Activated CD8-positive, alpha-beta memory T cell treated with anti-CD3 and anti-CD28 coated beads, Interleukin-2, amount 10 ng/mL, durations not matched to agents 7 days and 5 days (primary cell): ENCODE measurements at regions of chr13 and their contacts with region 1.

Region 1: GRCh38 chr13:24220086-24220703 is 59.7 kb downstream of the SPATA13 start:
- DNase-seq: peak; percentile 75
- ATAC-seq: peak; percentile 77
- H3K4me3 Mint-ChIP-seq: no peak overlapping the region
- H3K27ac Mint-ChIP-seq: no peak overlapping the region
- H3K4me1 Mint-ChIP-seq: peaks cover 54% of the 10 kb centered on the region
- H3K27me3 Mint-ChIP-seq: no peaks in the 10 kb centered on the region

Region 2: DNA sequence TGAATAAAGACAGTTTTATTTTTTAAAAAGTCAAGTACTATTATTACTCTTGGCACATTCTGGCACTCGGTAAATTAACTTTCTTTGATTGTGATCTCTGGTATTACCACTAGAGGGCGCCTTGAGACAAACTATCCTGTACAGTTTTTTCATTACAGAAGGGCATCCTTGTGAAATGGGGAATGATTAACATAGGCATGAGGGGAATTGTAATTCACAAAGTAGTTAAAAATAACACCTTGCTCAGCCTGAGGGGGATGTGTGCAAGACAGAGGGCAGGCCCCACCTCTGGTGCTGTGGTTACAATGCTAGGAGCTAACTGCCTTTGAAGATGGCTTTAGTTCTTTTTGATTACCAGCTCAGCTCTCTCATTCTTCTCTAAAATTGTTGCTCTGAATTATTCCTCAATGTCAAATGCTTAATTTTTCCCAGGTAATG is 298.7 kb before region 1 on chr13:
- CTCF ChIA-PET with region 1: interaction called, 15 read pairs
- DNase-seq: no peak
- ATAC-seq: no peak
- H3K4me3 Mint-ChIP-seq: no peak overlapping the region
- H3K27ac Mint-ChIP-seq: no peak overlapping the region
- H3K4me1 Mint-ChIP-seq: no peaks in the 10 kb centered on the region
- H3K27me3 Mint-ChIP-seq: peaks cover 59% of the 10 kb centered on the region

Region 3: DNA sequence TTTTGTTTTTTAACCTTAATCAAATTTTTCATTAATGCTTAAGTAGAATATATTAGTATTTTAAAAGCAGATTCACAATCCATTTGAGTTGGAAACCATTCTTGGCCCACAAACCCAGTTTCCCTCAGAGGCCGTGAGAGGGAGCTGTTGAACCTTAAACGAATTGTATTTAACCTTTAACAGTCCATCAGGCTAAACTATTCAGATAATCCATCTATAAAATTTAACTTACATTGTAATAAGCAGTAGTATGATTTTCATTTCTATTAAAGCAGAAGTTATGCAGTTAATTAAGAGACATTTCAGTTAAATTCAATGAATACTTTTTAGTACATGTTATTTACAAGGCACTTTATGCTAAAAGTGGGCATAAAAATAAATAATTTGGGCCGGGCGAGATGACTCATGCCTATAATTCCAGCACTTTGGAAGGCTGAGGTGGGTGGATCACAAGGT is 199.8 kb before region 1 on chr13:
- CTCF ChIA-PET with region 1: interaction called, 37 read pairs
- DNase-seq: peak; percentile 65
- ATAC-seq: peak; percentile 45
- H3K4me3 Mint-ChIP-seq: no peak overlapping the region
- H3K27ac Mint-ChIP-seq: no peak overlapping the region
- H3K4me1 Mint-ChIP-seq: peaks cover 10% of the 10 kb centered on the region
- H3K27me3 Mint-ChIP-seq: no peaks in the 10 kb centered on the region

Region 4: DNA sequence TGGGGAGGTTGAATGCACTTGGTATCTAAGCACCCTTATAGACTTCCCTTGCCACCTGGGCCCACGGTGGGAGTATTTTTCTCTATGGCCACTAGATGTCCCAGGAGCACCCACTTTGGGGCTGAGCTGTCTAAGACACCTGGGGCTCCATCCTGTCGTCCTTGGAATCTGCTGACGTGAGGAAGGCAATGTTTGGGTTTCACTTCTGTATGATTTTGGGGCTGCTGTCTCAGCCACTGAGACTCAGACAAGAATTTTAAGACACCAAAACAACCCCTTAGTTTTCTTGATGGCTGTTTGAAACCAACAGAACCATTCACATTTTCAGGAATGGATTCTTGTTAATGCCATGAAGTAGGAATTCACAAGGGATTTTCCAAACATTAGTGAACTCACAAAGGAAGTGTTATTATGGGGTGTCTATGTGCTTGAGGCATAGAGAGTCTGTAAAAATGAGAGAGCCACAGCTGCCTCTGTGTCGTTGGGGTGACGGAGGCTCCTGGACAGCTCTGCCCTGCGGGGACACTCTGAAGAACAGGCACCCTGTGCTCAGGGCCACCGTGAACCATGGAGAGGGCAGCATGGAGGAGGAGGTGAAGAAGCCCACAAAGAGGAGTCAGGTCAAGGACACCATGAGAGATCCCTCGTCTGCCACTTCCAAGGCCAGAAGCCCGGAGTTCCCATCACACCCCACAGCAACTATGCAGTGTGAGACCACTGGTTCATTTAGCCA is 166.5 kb before region 1 on chr13:
- CTCF ChIA-PET with region 1: interaction called, 53 read pairs
- DNase-seq: peak; percentile 80
- ATAC-seq: peak; percentile 94
- H3K4me3 Mint-ChIP-seq: no peak overlapping the region
- H3K27ac Mint-ChIP-seq: no peak overlapping the region
- H3K4me1 Mint-ChIP-seq: peaks cover 22% of the 10 kb centered on the region
- H3K27me3 Mint-ChIP-seq: peaks cover 20% of the 10 kb centered on the region

Region 5: DNA sequence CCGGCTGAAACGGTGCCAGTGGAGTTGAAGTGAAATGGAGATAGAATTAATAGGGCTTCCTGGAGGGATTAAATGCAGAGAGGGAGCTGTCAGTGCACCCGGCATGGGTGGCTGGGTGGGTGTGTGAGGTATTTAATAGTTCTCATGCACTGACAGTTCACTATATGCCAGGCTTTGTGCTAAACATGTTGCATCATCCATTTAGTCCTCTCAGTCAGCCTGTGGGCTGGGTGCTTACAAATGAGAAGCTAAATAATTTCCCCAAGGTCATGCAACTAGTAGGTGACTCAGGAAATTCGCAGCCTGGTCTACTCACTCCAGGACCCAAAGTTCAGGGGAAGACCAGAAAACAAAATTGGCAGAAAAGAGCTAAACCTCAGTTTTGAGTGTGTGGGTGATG is 123.1 kb before region 1 on chr13:
- CTCF ChIA-PET with region 1: interaction called, 11 read pairs
- DNase-seq: peak; percentile 65
- ATAC-seq: peak; percentile 78
- H3K4me3 Mint-ChIP-seq: peak overlapping the region; percentile 17
- H3K27ac Mint-ChIP-seq: peak overlapping the region; percentile 82
- H3K4me1 Mint-ChIP-seq: peaks cover 22% of the 10 kb centered on the region
- H3K27me3 Mint-ChIP-seq: peaks cover 24% of the 10 kb centered on the region

Region 6: GRCh38 chr13:24135674-24136300 is 84.4 kb before region 1 on chr13:
- CTCF ChIA-PET with region 1: no interaction called
- DNase-seq: no peak
- ATAC-seq: no peak
- H3K4me3 Mint-ChIP-seq: no peak overlapping the region
- H3K27ac Mint-ChIP-seq: no peak overlapping the region
- H3K4me1 Mint-ChIP-seq: peaks cover 22% of the 10 kb centered on the region
- H3K27me3 Mint-ChIP-seq: no peaks in the 10 kb centered on the region

Region 7: GRCh38 chr13:24203811-24204210 is 16.4 kb before region 1 on chr13:
- CTCF ChIA-PET with region 1: interaction called, 20 read pairs
- DNase-seq: peak; percentile 61
- ATAC-seq: peak; percentile 98
- H3K4me3 Mint-ChIP-seq: peak overlapping the region; percentile 47
- H3K27ac Mint-ChIP-seq: peak overlapping the region; percentile 75
- H3K4me1 Mint-ChIP-seq: peaks cover 37% of the 10 kb centered on the region
- H3K27me3 Mint-ChIP-seq: peaks cover 2% of the 10 kb centered on the region

Region 8: GRCh38 chr13:24529478-24529877 is 309.3 kb after region 1 on chr13:
- CTCF ChIA-PET with region 1: no interaction called
- DNase-seq: no peak
- ATAC-seq: no peak
- H3K4me3 Mint-ChIP-seq: no peak overlapping the region
- H3K27ac Mint-ChIP-seq: no peak overlapping the region
- H3K4me1 Mint-ChIP-seq: no peaks in the 10 kb centered on the region
- H3K27me3 Mint-ChIP-seq: peaks cover 59% of the 10 kb centered on the region